Heart right ventricle (tissue), 16 donors: ENCODE measurements at regions of chr3 and their contacts with region 1.

Region 1: DNA sequence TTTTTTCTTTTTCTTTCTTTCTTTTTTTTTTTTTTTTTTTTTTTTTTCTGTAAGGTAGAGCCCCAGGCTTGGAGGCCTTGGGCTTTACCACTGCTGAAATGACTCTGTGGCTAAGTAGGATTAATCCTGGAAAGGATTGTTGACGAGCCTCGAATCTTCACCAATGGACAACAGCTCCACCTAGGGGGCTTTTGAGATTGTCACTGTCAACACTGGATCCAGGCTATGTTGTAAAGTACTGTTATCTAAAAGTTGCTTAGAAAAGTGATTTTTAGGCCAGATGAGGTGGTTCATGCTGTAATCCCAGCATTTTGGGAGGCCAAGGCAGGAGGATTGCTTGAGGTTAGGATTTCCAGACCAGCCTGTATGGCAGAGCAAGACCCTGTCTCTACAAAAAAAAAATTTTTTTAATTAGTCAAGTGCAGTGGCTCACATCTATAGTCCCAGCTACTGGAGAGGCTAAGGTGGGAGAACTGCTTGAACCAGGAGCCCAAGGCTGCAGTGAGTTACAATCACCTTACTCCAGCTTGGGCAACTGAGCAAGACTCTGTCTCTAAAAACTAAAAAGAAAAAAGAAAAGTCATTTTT is 41.6 kb downstream of the KLHL18 start:
- DNase-seq: peak in 1 of 2 donors; percentile 77
- ATAC-seq: peak; percentile 83 to 95 (median 91)
- H3K4me3 ChIP-seq: no peak overlapping the region
- H3K27ac ChIP-seq: no peak overlapping the region
- H3K4me1 ChIP-seq: peaks cover 0 to 3% (median 0%) of the 10 kb centered on the region in 9 donors
- H3K27me3 ChIP-seq: no peaks in the 10 kb centered on the region
- CTCF ChIP-seq: peak; percentile 61 to 83 (median 73)

Region 2: DNA sequence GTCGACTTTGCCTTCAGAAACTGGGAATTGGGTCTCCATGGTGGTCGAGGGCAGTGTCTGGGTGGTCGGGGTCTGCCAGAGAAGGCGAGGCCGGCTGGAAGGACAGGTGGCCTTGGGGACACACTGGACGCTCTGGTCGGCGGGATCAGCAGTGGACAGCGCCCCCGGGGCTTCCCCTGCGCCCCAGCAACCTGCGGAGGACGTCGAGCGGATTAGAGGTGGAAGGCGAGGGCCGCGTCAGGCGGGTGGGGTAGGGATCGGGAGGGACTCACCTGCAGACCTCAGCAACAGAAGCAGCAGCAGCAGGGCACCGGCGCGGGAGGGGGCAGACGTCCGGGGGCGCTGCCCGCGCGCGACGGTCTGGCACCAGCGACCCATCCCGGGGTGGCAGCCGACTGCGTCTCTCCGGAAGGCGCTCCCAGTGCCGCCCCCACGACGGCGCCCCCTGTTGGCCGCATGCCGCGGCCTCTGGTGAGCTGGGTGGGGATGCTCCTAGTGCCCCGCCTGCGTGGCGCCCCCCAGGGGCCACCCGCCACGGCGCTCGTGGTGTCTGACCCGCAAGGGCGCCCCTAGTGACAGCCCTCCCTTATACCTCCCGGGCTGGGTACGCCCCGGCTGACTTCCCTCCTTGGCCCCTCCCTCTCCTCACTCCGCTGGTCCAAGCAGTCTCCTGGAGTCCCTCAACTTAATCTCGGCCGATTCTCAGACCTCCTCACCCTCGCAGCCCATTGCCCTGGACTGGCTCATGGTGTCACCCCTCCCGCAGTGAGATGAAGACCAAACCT is 606.7 kb before region 1 on chr3 and contains the start of gene PRSS50:
- intact Hi-C with region 1: loop called in 1 of 10 experiments (anchors 10 kb)
- DNase-seq: peak in 1 of 2 donors; percentile 4
- ATAC-seq: peak in 3 of 8 donors; percentile 16 to 32 (median 25)
- H3K4me3 ChIP-seq: no peak within 1 kb of the TSS
- H3K27ac ChIP-seq: no peak within 1 kb of the TSS
- H3K4me1 ChIP-seq: no peaks in the 10 kb centered on the region
- H3K27me3 ChIP-seq: peaks cover 0 to 30% (median 13%) of the 10 kb centered on the region in 7 donors
- CTCF ChIP-seq: peak in 8 of 9 donors; percentile 10 to 37 (median 25)
- total RNA-seq, gene PRSS50: 0.09 to 0.37 (median 0.25) TPM in 8 of 10 donors, not detected in the others

Region 3: GRCh38 chr3:46923559-46924350 is 400.6 kb before region 1 on chr3:
- intact Hi-C with region 1: loop called in 1 of 10 experiments (anchors 10 kb)
- DNase-seq: no peak
- ATAC-seq: peak in 6 of 8 donors; percentile 29 to 60 (median 40)
- H3K4me3 ChIP-seq: no peak overlapping the region
- H3K27ac ChIP-seq: peak overlapping the region in 3 of 10 donors; percentile 7 to 53 (median 15)
- H3K4me1 ChIP-seq: peaks cover 12 to 60% (median 51%) of the 10 kb centered on the region in 9 donors
- H3K27me3 ChIP-seq: no peaks in the 10 kb centered on the region
- CTCF ChIP-seq: peak; percentile 37 to 77 (median 69)

Region 4: DNA sequence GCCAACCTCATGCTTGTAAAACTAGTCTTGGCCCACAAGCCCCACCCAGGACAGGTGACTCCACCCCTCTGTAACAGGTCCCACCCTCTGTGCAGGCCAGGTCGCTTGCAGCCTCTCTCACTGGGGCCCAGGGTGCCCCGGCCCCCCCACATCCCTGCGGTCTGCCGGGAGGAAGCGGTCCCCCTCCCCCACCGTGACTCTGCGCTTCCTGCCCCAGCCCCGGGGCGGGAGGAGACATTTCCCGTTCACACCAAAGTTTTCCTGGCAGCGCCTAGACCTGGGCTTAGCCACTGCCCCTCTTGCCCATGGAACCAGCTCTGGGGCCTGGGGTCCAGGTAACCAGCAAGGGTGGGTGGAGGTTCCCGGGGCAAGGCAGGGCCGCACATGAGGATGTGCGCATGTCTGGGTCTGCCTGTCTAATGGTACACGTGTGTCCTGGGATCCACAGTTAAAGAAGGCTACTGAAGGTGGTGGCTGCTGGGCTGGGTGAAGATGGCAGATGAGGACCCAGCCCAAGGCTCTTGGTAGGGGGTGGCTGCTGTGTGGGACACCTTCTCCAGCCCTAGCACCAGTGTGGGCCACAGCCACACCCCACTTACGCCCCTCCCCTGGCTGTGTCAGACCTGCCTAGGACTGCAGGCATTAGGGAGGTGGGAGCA is 336.5 kb before region 1 on chr3:
- intact Hi-C with region 1: no loop called
- DNase-seq: peak; percentile 70 to 71
- ATAC-seq: peak; percentile 67 to 88 (median 78)
- H3K4me3 ChIP-seq: peak overlapping the region in 7 of 10 donors; percentile 5 to 53 (median 24)
- H3K27ac ChIP-seq: peak overlapping the region in 9 of 10 donors; percentile 35 to 90 (median 62)
- H3K4me1 ChIP-seq: peaks cover 6 to 79% (median 20%) of the 10 kb centered on the region in 9 donors
- H3K27me3 ChIP-seq: no peaks in the 10 kb centered on the region
- CTCF ChIP-seq: no peak

Region 5: GRCh38 chr3:47164007-47164881 is 160.1 kb before region 1 on chr3 and contains the start of gene SETD2:
- intact Hi-C with region 1: loop called in 1 of 10 experiments (anchors 5 kb)
- DNase-seq: peak; percentile 96
- ATAC-seq: peak; percentile 96 to 98 (median 97)
- H3K4me3 ChIP-seq: peak within 1 kb of the TSS; percentile 81 to 99 (median 95)
- H3K27ac ChIP-seq: peak within 1 kb of the TSS; percentile 91 to 98 (median 96)
- H3K4me1 ChIP-seq: peaks cover 8 to 55% (median 51%) of the 10 kb centered on the region in 9 donors
- H3K27me3 ChIP-seq: no peaks in the 10 kb centered on the region
- CTCF ChIP-seq: peak in 8 of 9 donors; percentile 24 to 57 (median 40)
- total RNA-seq, gene SETD2: 23.5 to 34.4 (median 30.6) TPM

Region 6: GRCh38 chr3:47259114-47259513 is 65.3 kb before region 1 on chr3:
- intact Hi-C with region 1: loop called in 5 of 10 experiments (anchors 5 kb)
- DNase-seq: no peak
- ATAC-seq: no peak
- H3K4me3 ChIP-seq: no peak overlapping the region
- H3K27ac ChIP-seq: no peak overlapping the region
- H3K4me1 ChIP-seq: no peaks in the 10 kb centered on the region
- H3K27me3 ChIP-seq: no peaks in the 10 kb centered on the region
- CTCF ChIP-seq: no peak

Region 7: DNA sequence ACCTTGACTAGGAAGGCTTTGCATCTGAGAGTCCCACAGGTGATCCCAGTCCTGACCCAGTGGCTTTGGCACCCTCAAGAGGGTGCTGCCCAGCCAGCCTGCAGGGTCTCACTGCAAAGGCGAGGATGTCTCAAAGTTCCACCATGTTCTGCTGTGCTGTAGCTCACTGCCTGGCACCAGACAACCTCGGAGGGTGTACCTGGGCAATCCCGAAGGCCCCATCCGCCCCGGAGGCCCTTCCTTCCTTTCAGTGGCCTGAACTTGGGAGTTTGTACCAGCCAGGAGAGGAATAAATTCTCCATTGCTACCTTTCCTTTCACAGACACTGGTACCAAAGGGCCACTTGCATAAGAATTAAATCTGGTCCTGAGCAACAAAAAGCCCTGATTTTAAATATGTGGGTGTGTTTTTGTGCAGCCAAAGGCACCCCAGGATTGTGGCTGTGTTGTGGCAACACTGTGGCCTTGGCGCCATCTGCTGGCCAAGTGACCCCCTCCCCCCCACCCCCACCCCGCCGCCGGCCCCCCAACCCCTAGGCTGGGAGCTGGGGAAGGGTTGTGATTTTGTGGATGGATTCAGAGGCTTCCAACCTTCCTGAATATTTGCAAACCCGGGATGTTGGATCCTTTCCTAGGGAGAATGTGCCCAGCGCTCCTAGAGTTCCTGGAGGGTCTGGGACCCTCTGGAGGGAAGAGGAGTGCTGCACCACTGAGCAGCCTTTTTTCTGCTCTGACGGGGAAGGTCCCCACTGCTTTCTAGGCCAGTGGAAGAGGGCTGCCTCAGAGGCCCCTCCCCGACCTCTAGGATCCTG is 46.7 kb after region 1 on chr3:
- intact Hi-C with region 1: no loop called
- DNase-seq: peak in 1 of 2 donors; percentile 31
- ATAC-seq: peak in 4 of 8 donors; percentile 7 to 62 (median 57)
- H3K4me3 ChIP-seq: no peak overlapping the region
- H3K27ac ChIP-seq: no peak overlapping the region
- H3K4me1 ChIP-seq: peaks cover 0 to 8% (median 0%) of the 10 kb centered on the region in 9 donors
- H3K27me3 ChIP-seq: peaks cover 0 to 7% (median 0%) of the 10 kb centered on the region in 7 donors
- CTCF ChIP-seq: peak in 8 of 9 donors; percentile 24 to 65 (median 59)